Prostate gland (tissue), 2 donors: ENCODE measurements at regions of chr18 and their contacts with region 1.

Region 1: DNA sequence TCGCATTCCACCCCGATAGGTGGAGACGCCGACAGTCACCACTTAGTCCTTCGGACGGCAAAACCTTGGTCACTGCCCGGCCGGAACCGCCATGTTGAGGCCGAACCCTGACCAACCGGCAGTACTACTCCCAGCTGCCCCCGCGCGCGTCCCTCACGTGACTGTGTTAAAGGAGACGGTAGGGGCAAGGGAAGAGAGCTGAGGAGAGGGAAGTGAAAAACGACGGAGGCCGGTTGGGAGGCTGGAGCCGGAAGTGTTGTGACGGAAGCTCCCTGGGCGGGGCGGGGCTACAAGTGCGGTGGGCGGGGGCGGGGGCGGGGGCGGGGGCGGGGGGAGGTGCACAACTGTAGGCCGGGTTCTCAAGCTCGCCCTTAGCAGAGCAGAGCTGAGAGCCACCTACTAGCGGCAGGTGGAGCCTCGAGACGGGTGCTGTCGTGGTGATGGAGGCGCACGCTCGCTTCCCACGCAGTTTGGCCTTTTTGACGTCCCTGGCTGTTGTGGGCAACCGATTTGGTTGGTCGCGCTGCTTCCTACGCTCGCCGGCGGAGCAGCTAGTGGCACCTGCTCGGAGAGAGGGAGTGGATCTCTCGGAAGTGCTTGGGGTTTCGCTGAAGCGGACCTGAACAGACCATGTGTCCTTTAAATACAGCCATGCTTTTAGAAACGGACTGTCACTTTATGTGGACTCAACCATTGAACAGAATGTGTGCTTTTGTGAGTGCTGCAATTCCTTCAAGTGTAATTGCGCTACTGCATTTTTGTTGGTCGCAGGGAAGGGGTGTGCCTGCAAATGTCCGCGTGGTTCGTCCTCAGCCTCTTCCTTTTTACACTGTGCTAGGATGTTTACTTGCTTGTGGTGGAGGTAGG is at the start of gene TRAPPC8:
- DNase-seq: peak; percentile 99
- H3K4me3 ChIP-seq: peak within 1 kb of the TSS; percentile 76 to 89
- H3K27ac ChIP-seq: peak within 1 kb of the TSS; percentile 83 to 91
- H3K4me1 ChIP-seq: peaks cover 3% of the 10 kb centered on the region
- H3K27me3 ChIP-seq: no peaks in the 10 kb centered on the region
- CTCF ChIP-seq: peak in 1 of 4 experiments; percentile 10
- POLR2A ChIP-seq: peak; percentile 48
- total RNA-seq, gene TRAPPC8: 27.0 to 45.4 TPM

Region 2: DNA sequence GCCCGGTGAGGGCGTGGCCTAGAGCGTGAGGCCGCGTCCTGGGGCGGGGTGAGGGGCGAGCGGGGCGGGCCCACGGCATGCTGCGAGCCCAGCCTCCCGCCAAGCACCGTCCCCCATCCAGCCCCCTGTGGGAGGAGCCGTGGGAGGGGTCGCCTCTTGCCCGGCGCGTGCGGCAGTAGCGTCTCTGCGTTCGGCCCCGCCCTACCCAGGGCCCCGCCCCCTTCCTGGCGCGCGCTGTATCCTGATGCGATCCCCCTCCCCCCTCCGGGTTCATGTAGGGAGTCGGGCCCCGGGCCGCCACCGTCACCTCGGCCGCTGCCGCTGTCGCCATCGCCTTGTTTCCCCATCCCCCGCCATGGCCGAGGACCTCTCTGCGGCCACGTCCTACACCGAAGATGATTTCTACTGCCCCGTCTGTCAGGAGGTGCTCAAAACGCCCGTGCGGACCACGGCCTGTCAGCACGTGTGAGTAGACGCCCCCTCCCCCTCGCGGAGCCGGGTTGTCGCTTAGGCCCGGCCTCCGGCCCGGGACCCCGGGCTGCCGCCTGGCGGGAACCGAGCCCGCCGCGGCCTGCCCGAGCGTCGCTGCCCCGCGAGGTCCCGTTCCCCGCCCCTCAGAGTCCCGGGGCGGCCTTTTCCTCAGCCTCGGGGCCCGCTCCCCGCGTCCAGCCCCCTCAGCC is 149.3 kb after region 1 on chr18:
- intact Hi-C with region 1: loop called (anchors 5 kb)
- DNase-seq: peak; percentile 99
- H3K4me3 ChIP-seq: peak overlapping the region; percentile 87 to 93
- H3K27ac ChIP-seq: peak overlapping the region; percentile 100
- H3K4me1 ChIP-seq: no peaks in the 10 kb centered on the region
- H3K27me3 ChIP-seq: no peaks in the 10 kb centered on the region
- CTCF ChIP-seq: no peak
- POLR2A ChIP-seq: peak; percentile 78